ENCODE measurements at regions of chr3 and their contacts with region 1.

Region 1: GRCh38 chr3:192917404-192918274 is at the start of gene MB21D2:
- DNase-seq: peak in 8 of 9 experiments; percentile 21 to 65 (median 38)
- ATAC-seq: peak; percentile 73
- H3K4me3 ChIP-seq: peak within 1 kb of the TSS; percentile 55 to 74
- H3K4me3 Mint-ChIP-seq: peak within 1 kb of the TSS; percentile 86
- H3K27ac ChIP-seq: peak within 1 kb of the TSS in 1 of 2 experiments; percentile 44
- H3K27ac Mint-ChIP-seq: peak within 1 kb of the TSS; percentile 86
- H3K4me1 ChIP-seq: peaks cover 5% of the 10 kb centered on the region
- H3K4me1 Mint-ChIP-seq: peaks cover 23% of the 10 kb centered on the region
- H3K27me3 ChIP-seq: peaks cover 0 to 6% of the 10 kb centered on the region in 2 experiments
- H3K27me3 Mint-ChIP-seq: peaks cover 60% of the 10 kb centered on the region
- CTCF ChIP-seq: no peak
- total RNA-seq, gene MB21D2: 1.2 to 1.4 TPM

Region 2: GRCh38 chr3:192816351-192816750 is 101.3 kb before region 1 on chr3:
- CTCF ChIA-PET with region 1: no interaction called
- POLR2A ChIA-PET with region 1: no interaction called
- intact Hi-C with region 1: loop called in 1 of 2 experiments (anchors 10 kb)
- DNase-seq: peak in 2 of 9 experiments; percentile 14 to 40
- ATAC-seq: no peak
- H3K4me3 ChIP-seq: no peak overlapping the region
- H3K4me3 Mint-ChIP-seq: no peak overlapping the region
- H3K27ac ChIP-seq: no peak overlapping the region
- H3K27ac Mint-ChIP-seq: no peak overlapping the region
- H3K4me1 ChIP-seq: no peaks in the 10 kb centered on the region
- H3K4me1 Mint-ChIP-seq: no peaks in the 10 kb centered on the region
- H3K27me3 ChIP-seq: no peaks in the 10 kb centered on the region
- H3K27me3 Mint-ChIP-seq: no peaks in the 10 kb centered on the region
- CTCF ChIP-seq: no peak

Region 3: DNA sequence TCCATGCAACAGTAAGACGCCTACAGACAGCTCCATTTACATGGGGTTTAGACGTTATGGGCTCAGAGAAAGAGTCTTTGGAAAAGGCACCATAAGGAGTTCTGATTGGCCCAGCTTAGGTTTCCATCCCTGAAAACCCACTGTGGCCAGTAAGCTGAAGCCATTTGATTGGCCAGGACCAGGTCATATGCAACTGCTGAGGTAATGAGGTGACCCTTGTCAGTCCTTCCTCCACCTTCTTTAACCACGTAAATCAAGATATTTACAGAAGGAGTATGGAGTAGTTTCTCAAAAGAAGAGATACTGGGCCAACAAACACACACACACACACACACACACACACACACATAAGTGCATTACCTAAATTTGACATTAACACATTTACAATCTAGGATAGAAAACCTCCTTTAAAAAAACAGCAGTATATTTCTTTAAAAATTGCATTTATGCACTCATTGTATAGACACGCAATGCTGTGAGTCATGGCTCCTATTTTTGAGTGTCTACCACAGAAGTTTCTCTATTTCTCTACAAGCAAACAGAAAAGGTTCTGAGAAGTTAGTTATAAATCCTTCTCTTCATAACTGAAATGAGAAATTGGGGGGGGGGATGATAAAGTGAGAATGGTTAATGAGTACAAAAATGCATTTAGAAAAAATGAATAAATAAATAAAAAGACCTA is 16.3 kb after region 1 on chr3:
- CTCF ChIA-PET with region 1: no interaction called
- POLR2A ChIA-PET with region 1: no interaction called
- intact Hi-C with region 1: no loop called
- DNase-seq: no peak
- ATAC-seq: no peak
- H3K4me3 ChIP-seq: no peak overlapping the region
- H3K4me3 Mint-ChIP-seq: no peak overlapping the region
- H3K27ac ChIP-seq: no peak overlapping the region
- H3K27ac Mint-ChIP-seq: no peak overlapping the region
- H3K4me1 ChIP-seq: no peaks in the 10 kb centered on the region
- H3K4me1 Mint-ChIP-seq: no peaks in the 10 kb centered on the region
- H3K27me3 ChIP-seq: no peaks in the 10 kb centered on the region
- H3K27me3 Mint-ChIP-seq: peaks cover 2% of the 10 kb centered on the region
- CTCF ChIP-seq: no peak